MCF 10A (cell line): ENCODE measurements at regions of chr6 and their contacts with region 1.

Region 1: GRCh38 chr6:70310063-70310694 is 7.3 kb upstream of the COL9A1 start:
- DNase-seq: peak; percentile 58
- H3K4me3 Mint-ChIP-seq: no peak overlapping the region
- H3K27ac Mint-ChIP-seq: no peak overlapping the region
- H3K4me1 Mint-ChIP-seq: peaks cover 15% of the 10 kb centered on the region
- H3K27me3 Mint-ChIP-seq: peaks cover 88% of the 10 kb centered on the region
- CTCF ChIP-seq: peak; percentile 43

Region 2: DNA sequence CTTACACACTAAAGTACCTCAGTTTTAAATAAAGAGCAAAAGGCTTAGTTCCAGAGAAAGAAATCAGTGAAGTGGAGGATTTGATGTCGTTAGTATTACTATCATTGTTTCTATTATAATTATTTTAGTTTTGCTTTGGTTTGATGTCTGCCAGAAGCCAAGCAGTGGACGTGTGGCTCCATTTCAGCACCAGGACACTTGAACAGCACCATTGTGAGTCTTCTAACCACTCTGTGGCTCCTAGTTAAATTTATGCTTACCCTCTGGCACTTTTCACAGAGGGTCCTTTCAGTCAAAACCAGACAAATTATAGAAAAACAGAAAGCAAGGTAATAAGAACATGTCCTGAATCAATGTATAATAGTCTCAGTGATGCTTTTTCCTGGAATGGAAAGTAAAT is 10.7 kb before region 1 on chr6:
- CTCF ChIA-PET with region 1: interaction called, 14 read pairs
- POLR2A ChIA-PET with region 1: no interaction called
- intact Hi-C with region 1: no loop called
- DNase-seq: peak; percentile 40
- H3K4me3 Mint-ChIP-seq: no peak overlapping the region
- H3K27ac Mint-ChIP-seq: no peak overlapping the region
- H3K4me1 Mint-ChIP-seq: no peaks in the 10 kb centered on the region
- H3K27me3 Mint-ChIP-seq: peaks cover 96% of the 10 kb centered on the region
- CTCF ChIP-seq: no peak

Region 3: DNA sequence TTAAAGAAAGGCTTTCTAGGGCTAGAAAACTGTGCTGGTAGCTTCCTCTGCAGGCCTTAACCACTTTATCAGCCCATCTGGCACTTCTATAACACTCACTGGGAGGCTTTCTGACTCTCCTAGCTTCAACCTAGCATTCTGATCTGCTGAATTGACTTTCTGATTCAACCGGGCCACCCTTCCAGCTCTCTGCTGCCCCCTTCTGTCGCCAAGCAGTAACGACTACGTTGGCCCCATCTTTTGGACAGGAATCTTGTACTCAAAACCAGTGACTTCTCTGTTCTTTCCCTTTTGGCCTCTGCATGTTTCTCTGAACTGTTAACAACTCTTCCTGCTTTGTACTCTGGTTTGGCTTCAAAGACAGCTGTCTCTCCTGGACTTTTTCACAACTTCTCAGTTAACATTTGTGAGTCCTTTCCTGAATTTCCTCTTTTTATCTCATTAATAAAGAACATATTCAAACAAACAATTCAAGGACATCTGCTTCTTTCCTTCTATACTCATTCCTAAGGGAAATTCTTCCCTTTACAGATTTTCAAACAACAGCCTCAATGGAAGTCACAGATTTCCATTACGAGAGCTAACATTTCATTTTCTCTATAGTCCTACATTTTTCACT is 59.3 kb after region 1 on chr6:
- CTCF ChIA-PET with region 1: interaction called, 233 read pairs
- POLR2A ChIA-PET with region 1: interaction called, 6 read pairs
- intact Hi-C with region 1: loop called (anchors 1 kb)
- DNase-seq: peak; percentile 73
- H3K4me3 Mint-ChIP-seq: no peak overlapping the region
- H3K27ac Mint-ChIP-seq: no peak overlapping the region
- H3K4me1 Mint-ChIP-seq: peaks cover 13% of the 10 kb centered on the region
- H3K27me3 Mint-ChIP-seq: peaks cover 69% of the 10 kb centered on the region
- CTCF ChIP-seq: peak; percentile 89

Region 4: GRCh38 chr6:70421509-70421908 is 111.3 kb after region 1 on chr6:
- CTCF ChIA-PET with region 1: interaction called, 10 read pairs
- POLR2A ChIA-PET with region 1: no interaction called
- intact Hi-C with region 1: no loop called
- DNase-seq: no peak
- H3K4me3 Mint-ChIP-seq: no peak overlapping the region
- H3K27ac Mint-ChIP-seq: no peak overlapping the region
- H3K4me1 Mint-ChIP-seq: no peaks in the 10 kb centered on the region
- H3K27me3 Mint-ChIP-seq: no peaks in the 10 kb centered on the region
- CTCF ChIP-seq: no peak

Region 5: DNA sequence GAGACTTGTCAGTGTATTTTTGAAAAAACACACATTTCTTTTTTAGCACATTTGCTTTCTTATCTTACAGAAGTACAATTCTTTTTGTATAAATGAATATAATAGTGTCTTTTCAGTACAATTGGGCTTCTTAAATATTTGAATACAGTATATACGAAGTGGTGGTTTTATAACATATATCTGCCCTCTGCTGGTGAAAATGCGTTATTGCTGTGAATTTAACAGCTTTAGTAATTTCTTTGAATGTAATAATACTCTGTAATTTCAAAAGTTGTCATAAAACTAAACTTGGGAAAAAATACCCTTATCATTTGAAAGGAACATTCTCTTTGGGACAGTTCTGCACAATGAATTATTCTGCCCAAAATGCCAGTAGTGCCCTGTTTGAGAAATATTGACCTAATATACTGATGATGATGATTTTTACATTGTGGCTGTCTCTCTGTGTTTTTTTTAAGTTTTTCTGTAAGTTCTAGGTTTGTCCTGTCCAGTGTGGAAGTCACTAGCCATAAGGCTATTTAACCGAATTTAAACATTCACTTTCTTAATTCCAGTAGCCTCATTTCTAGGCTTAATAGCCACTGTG is 376.5 kb after region 1 on chr6:
- CTCF ChIA-PET with region 1: interaction called, 36 read pairs
- POLR2A ChIA-PET with region 1: interaction called, 3 read pairs
- intact Hi-C with region 1: loop called (anchors 1 kb)
- DNase-seq: peak; percentile 42
- H3K4me3 Mint-ChIP-seq: no peak overlapping the region
- H3K27ac Mint-ChIP-seq: no peak overlapping the region
- H3K4me1 Mint-ChIP-seq: no peaks in the 10 kb centered on the region
- H3K27me3 Mint-ChIP-seq: no peaks in the 10 kb centered on the region
- CTCF ChIP-seq: peak; percentile 37

Region 6: DNA sequence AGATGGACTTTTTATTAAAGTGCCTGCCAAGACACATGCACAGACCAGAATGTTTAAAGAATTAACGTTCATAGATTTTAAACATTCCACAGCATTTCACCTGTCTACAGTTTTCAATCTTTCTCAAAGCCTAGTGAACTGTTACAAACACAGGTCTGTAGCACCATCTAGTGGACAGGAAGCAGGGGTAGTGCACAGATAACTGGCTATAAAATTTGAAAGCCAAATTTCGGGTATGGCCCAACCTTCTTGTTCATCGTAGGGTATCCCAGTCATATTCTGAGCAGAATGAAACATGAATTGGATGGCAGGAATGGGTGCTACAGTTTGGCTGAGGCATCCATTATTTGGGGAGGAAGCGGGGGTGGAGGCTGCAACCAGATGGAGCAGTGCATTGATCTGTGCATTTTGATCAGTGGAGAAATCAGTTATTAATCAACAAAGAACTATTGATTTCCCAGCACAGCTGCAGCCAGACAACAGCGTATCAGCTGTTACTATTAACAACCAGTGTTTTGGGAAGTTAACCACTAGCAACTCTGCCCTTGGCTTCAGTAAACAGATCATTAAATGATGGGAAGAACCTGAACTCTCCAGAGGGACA is 702.8 kb after region 1 on chr6:
- CTCF ChIA-PET with region 1: interaction called, 51 read pairs
- POLR2A ChIA-PET with region 1: no interaction called
- intact Hi-C with region 1: loop called (anchors 2 kb)
- DNase-seq: peak; percentile 73
- H3K4me3 Mint-ChIP-seq: no peak overlapping the region
- H3K27ac Mint-ChIP-seq: no peak overlapping the region
- H3K4me1 Mint-ChIP-seq: no peaks in the 10 kb centered on the region
- H3K27me3 Mint-ChIP-seq: peaks cover 56% of the 10 kb centered on the region
- CTCF ChIP-seq: peak; percentile 82